ENCODE measurements at regions of chr14 and their contacts with region 1.

Region 1: GRCh38 chr14:61252369-61253063 is 28.6 kb downstream of the TMEM30B start:
- DNase-seq: peak; percentile 66
- H3K4me3 ChIP-seq: no peak overlapping the region
- H3K27ac ChIP-seq: no peak overlapping the region
- H3K4me1 ChIP-seq: no peaks in the 10 kb centered on the region
- H3K27me3 ChIP-seq: no peaks in the 10 kb centered on the region
- CTCF ChIP-seq: peak; percentile 71

Region 2: GRCh38 chr14:60622917-60623257 is 629.6 kb before region 1 on chr14:
- intact Hi-C with region 1: loop called (anchors 5 kb)
- DNase-seq: no peak
- H3K4me3 ChIP-seq: no peak overlapping the region
- H3K27ac ChIP-seq: no peak overlapping the region
- H3K4me1 ChIP-seq: no peaks in the 10 kb centered on the region
- H3K27me3 ChIP-seq: no peaks in the 10 kb centered on the region
- CTCF ChIP-seq: no peak

Region 3: DNA sequence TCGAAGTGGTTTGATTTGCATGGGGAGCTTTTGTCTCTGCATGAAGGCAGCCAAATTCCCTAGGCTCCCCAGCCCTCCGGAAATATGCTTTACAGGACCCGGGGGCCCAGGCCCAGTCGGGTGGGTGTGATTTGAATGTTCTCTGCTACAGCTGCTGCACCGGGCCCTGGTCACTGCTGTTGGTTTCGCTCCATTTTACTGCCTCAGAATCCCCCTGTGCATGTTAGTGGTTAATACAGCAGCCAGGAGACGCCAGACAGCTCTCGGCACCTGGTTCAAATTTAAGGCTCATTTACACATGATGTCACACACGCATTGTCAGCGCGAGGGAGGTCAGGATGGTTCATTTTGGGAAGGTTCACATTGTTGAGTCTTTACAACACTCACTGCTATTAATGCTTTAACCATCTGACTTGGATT is 171.9 kb before region 1 on chr14:
- intact Hi-C with region 1: no loop called
- DNase-seq: no peak
- H3K4me3 ChIP-seq: no peak overlapping the region
- H3K27ac ChIP-seq: no peak overlapping the region
- H3K4me1 ChIP-seq: no peaks in the 10 kb centered on the region
- H3K27me3 ChIP-seq: no peaks in the 10 kb centered on the region
- CTCF ChIP-seq: no peak

Measured in colonic mucosa (tissue), 4 donors.